ENCODE measurements at regions of chr11 and their contacts with region 1.

Region 1: DNA sequence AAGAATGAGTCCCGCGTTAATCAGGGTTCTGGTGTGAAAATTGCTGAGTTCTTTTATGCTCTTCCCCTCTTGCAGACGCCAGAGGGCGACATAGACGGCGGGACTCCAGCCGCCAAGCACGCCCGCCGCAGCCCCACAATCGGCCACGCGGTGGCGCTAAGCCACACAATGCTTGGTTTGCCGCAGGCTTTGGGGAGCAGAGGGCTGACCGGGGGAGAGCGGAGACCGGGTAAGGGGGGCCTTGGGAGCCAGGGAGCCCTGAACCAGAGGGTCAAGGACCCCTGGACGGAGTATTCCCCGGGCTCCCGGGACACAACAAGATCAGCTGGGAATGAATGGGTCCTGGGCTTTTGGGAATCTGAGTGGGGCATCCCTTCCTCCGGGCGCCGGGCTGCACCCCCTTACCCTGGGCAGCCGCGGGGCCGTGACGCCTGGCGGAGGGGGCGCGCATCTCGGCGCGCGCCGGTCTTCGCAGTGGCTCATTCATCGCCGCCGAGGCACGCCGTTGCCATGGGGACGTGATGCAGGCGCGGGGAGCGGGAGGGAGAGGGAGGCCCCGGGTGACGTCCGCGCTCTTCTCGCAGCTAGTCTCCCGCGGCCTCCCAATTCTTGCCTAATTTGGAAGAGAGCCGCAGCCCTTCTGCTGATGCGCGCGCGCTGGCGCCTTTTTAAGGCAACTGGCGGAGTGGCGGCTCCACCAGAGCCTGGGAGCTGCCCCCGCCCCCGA is 12.2 kb upstream of the NPAS4 start:
- DNase-seq: peak; percentile 93
- ATAC-seq: peak; percentile 96
- H3K4me3 ChIP-seq: peak overlapping the region; percentile 26
- H3K27ac ChIP-seq: peak overlapping the region; percentile 6; the same call in 1 of the 2 replicates
- H3K4me1 ChIP-seq: peaks cover 3% of the 10 kb centered on the region
- H3K27me3 ChIP-seq: peaks cover 13% of the 10 kb centered on the region
- CTCF ChIP-seq: peak; percentile 100
- POLR2A ChIP-seq: peak; percentile 57
- RAD21 ChIP-seq: peak; percentile 100

Region 2: DNA sequence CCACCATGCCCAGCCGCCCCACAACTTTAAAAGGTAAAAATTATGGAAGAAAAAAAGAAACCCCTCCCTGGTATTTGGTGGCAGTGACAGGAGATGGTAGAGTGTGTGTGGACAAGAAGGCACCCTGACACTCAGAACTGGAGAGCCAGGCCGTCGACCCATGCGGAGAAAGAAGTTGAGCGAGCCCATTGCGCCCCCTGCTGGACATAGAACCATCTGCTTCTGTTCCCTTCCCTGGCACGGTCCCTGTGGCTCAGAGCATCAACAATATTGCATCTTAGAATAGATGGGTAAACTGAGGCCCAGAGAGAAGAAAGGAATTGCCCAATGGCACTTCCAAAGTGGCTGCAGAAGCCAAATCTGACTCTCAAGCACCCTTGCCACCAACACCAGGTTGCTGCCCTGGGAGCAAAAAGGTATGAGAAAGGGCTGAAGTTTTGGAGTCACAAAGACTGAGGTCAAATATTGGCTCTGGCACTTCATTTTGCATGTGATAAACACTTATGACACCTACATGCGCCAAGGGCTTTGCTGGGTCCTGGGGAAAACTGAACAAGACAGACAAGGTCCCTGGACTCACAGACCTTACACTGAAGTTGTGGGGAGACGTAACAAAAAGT is 21.4 kb after region 1 on chr11:
- CTCF ChIA-PET with region 1: interaction called, 7 read pairs
- POLR2A ChIA-PET with region 1: no interaction called
- dilution Hi-C with region 1: no loop called
- in situ Hi-C with region 1: no loop called
- intact Hi-C with region 1: loop called (anchors 1 kb)
- DNase-seq: peak; percentile 67
- ATAC-seq: peak; percentile 98
- H3K4me3 ChIP-seq: no peak overlapping the region
- H3K27ac ChIP-seq: no peak overlapping the region
- H3K4me1 ChIP-seq: no peaks in the 10 kb centered on the region
- H3K27me3 ChIP-seq: no peaks in the 10 kb centered on the region
- CTCF ChIP-seq: peak; percentile 90
- POLR2A ChIP-seq: no peak
- RAD21 ChIP-seq: peak; percentile 93

Region 3: DNA sequence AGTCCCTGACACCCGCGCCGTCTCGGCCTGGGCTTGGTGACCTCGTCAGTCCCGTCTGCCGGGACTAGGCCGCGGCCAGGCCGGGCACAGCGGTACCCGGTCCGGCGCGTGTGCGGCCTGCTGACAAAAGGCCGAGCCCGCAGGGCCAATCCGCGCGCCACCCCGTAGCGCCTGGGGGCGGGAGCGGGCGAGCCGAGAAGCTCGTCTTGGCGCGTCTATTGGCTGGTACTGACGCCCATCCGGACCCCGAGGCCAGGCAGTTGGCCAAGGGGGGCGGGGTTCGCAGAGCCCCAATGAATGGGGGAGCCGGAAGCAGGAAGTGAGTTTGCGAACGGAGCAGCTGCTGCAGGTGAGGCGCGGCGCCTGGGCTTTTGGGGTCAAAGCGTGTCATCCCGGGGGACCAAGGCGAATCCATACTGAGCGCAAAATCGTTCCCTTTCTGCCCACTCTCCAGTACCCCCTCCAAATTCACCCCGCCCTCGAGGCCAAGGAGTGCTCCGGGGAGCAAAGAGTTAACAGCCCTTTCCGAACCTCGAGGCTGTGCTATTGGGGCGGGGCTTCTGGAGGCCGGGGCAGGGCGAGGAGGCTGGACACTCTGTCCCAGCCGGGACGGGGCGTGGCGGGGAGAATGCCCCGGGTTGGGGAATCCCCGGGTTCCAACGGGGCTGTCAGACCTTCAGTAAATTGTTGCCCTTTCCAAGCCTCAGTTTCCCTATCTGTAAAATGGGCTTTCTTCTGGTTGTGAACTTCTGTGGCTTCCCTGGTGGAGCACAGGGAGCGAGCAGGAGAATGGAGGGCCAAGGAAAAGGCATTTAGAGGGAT is 71.7 kb after region 1 on chr11 and contains the start of gene DPP3:
- CTCF ChIA-PET with region 1: no interaction called
- POLR2A ChIA-PET with region 1: no interaction called
- dilution Hi-C with region 1: no loop called
- in situ Hi-C with region 1: no loop called
- intact Hi-C with region 1: loop called (anchors 1 kb)
- DNase-seq: peak; percentile 95
- ATAC-seq: peak; percentile 93
- H3K4me3 ChIP-seq: peak within 1 kb of the TSS; percentile 82
- H3K27ac ChIP-seq: peak within 1 kb of the TSS; percentile 91
- H3K4me1 ChIP-seq: peaks cover 8% of the 10 kb centered on the region
- H3K27me3 ChIP-seq: no peaks in the 10 kb centered on the region
- CTCF ChIP-seq: no peak
- POLR2A ChIP-seq: peak; percentile 93
- RAD21 ChIP-seq: no peak
- total RNA-seq, gene DPP3: 51.8 and 52.8 TPM in 2 replicates

Region 4: GRCh38 chr11:66579017-66579606 is 170.5 kb after region 1 on chr11:
- CTCF ChIA-PET with region 1: no interaction called
- POLR2A ChIA-PET with region 1: no interaction called
- dilution Hi-C with region 1: no loop called
- in situ Hi-C with region 1: no loop called
- intact Hi-C with region 1: no loop called
- DNase-seq: peak; percentile 77
- ATAC-seq: peak; percentile 93
- H3K4me3 ChIP-seq: no peak overlapping the region
- H3K27ac ChIP-seq: no peak overlapping the region
- H3K4me1 ChIP-seq: peaks cover 6% of the 10 kb centered on the region
- H3K27me3 ChIP-seq: no peaks in the 10 kb centered on the region
- CTCF ChIP-seq: peak; percentile 82
- POLR2A ChIP-seq: no peak
- RAD21 ChIP-seq: peak; percentile 85

Region 5: DNA sequence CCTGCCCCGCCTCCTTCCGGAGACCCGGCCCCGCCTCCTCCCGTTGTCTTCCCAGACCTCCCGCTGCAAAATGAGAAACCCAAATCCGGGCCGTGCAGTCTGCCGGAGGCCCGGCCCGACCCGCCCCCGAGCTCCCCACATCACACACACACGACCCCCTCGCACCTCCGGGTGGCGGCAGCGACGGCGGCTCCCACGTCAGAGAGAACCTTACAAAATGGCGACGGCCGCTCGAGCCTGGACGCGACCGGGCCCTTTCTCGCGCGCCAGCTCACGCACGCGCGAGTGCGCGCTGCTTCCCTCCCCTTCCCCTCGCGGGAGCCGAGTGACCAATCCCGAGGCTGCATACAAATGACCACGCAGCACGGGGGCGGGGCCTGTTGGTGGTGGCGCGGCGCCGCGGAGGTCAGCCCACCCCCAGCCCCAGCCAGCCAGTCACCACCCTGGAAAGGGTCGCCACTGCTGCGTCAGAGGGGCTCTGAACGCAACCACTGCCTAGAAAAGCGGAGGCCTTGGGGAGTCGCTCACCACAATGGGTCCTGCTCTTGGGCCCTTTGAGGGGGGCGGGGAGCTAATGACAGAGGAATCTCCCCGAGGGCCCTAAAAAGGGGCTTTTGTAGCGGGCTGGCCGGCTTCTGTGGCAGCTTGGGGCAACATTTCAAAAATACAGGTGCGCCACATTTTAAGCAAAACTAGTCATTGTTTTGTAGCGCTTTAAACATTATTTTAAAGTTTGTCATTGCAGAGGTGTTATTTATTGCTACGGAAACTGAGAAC is 269.1 kb after region 1 on chr11 and contains the start of gene RBM4B:
- CTCF ChIA-PET with region 1: no interaction called
- POLR2A ChIA-PET with region 1: no interaction called
- dilution Hi-C with region 1: no loop called
- in situ Hi-C with region 1: loop called (anchors 10 kb)
- intact Hi-C with region 1: loop called (anchors 1 kb)
- DNase-seq: peak; percentile 93
- ATAC-seq: peak; percentile 96
- H3K4me3 ChIP-seq: peak within 1 kb of the TSS; percentile 73
- H3K27ac ChIP-seq: peak within 1 kb of the TSS; percentile 97
- H3K4me1 ChIP-seq: peaks cover 5% of the 10 kb centered on the region
- H3K27me3 ChIP-seq: no peaks in the 10 kb centered on the region
- CTCF ChIP-seq: no peak
- POLR2A ChIP-seq: peak; percentile 97
- RAD21 ChIP-seq: 0 out of 2 replicates have a peak, but pooled peaks have one; percentile 1
- total RNA-seq, gene RBM4B: 23.1 and 25.6 TPM in 2 replicates

Region 6: GRCh38 chr11:66694732-66695207 is 286.1 kb after region 1 on chr11:
- CTCF ChIA-PET with region 1: no interaction called
- POLR2A ChIA-PET with region 1: no interaction called
- dilution Hi-C with region 1: no loop called
- in situ Hi-C with region 1: loop called (anchors 10 kb)
- intact Hi-C with region 1: loop called (anchors 1 kb)
- DNase-seq: peak; percentile 98
- ATAC-seq: peak; percentile 99
- H3K4me3 ChIP-seq: no peak overlapping the region
- H3K27ac ChIP-seq: no peak overlapping the region
- H3K4me1 ChIP-seq: no peaks in the 10 kb centered on the region
- H3K27me3 ChIP-seq: no peaks in the 10 kb centered on the region; the same call in 1 of the 2 replicates
- CTCF ChIP-seq: peak; percentile 98
- POLR2A ChIP-seq: peak; percentile 61
- RAD21 ChIP-seq: peak; percentile 90